ENCODE measurements at regions of chr6 and their contacts with region 1.

Region 1: GRCh38 chr6:20092071-20092566 is 120.2 kb downstream of the MBOAT1 start:
- DNase-seq: peak; percentile 16 to 56
- ATAC-seq: peak in 1 of 2 experiments; percentile 24; a peak in 1 of 6 replicates
- H3K4me3 ChIP-seq: no peak overlapping the region
- H3K27ac ChIP-seq: no peak overlapping the region
- H3K4me1 ChIP-seq: no peaks in the 10 kb centered on the region
- CTCF ChIP-seq: peak; percentile 57
- EP300 ChIP-seq: no peak
- POLR2A ChIP-seq: no peak
- RAD21 ChIP-seq: peak; percentile 72 to 73

Region 2: DNA sequence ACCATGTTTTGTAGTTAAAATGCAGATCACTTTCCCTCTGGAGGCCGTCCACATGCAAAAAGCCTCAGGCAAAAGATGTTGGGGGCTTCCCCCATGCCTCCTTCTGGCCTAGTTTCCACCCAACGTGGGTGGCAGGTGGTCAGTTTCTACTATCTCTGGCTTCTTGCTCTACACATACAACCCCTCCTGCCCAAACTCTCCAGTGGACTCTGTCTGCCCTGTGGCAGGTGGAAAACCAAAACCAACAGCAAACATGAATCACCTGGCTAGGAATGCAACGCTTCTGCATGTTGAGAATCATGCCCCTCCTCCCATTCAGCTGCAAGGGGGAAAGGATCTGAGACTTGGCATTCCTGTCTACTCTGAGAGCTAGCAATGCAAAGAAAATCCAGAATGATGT is 25.4 kb after region 1 on chr6:
- CTCF ChIA-PET with region 1: interaction called, 14 read pairs
- POLR2A ChIA-PET with region 1: no interaction called
- DNase-seq: no peak
- ATAC-seq: no peak
- H3K4me3 ChIP-seq: no peak overlapping the region
- H3K27ac ChIP-seq: no peak overlapping the region
- H3K4me1 ChIP-seq: peaks cover 14% of the 10 kb centered on the region; the same call in 2 of the 3 replicates
- CTCF ChIP-seq: no peak
- EP300 ChIP-seq: no peak
- POLR2A ChIP-seq: no peak
- RAD21 ChIP-seq: no peak

Region 3: GRCh38 chr6:20126789-20127653 is 34.9 kb after region 1 on chr6:
- CTCF ChIA-PET with region 1: interaction called, 34 read pairs
- POLR2A ChIA-PET with region 1: no interaction called
- DNase-seq: peak; percentile 40 to 41
- ATAC-seq: peak; percentile 92 to 98
- H3K4me3 ChIP-seq: no peak overlapping the region
- H3K27ac ChIP-seq: no peak overlapping the region
- H3K4me1 ChIP-seq: peaks cover 21% of the 10 kb centered on the region
- CTCF ChIP-seq: peak; percentile 66
- EP300 ChIP-seq: no peak
- POLR2A ChIP-seq: no peak
- RAD21 ChIP-seq: peak; percentile 41 to 50; a peak in 3 of 5 replicates

Measured in A549 (cell line).